Natural killer cell (primary cell): ENCODE measurements at regions of chr2 and their contacts with region 1.

Region 1: DNA sequence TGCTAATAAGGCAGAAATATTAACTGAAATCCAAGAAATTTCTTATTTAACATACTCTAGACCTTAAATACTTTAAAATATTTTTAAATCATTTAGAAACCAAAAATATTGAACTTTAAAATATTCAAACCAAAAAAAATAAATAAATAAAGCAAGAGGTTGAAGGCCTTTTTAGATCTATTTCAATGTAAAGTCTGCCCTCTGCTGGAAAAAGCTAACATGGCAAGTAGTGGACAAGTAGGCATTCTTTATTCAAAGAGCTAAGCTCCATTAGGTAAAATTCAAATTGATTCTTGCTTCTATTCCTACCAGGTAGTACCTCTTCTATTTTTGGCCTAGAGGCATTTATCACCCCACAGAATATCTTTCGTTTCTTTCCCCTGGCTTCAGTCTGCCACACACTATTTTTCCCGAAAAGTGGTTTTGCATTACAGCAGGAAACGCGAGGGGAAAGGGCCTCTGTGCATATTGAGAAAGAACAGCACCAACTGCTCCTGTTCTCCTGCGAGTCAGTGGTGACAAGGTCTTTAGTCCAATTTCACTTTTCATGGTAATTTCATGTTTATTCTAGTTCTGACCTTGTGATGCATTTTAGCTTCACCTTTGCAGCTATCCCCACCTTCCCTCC is 20.4 kb downstream of the IFIH1 start:
- DNase-seq: peak in 1 of 2 donors; percentile 82
- ATAC-seq: peak; percentile 71 to 78 (median 76)
- H3K4me3 ChIP-seq: no peak overlapping the region
- H3K4me3 Mint-ChIP-seq: no peak overlapping the region
- H3K27ac ChIP-seq: no peak overlapping the region
- H3K27ac Mint-ChIP-seq: no peak overlapping the region
- H3K4me1 ChIP-seq: no peaks in the 10 kb centered on the region
- H3K4me1 Mint-ChIP-seq: no peaks in the 10 kb centered on the region
- H3K27me3 ChIP-seq: no peaks in the 10 kb centered on the region
- H3K27me3 Mint-ChIP-seq: no peaks in the 10 kb centered on the region
- CTCF ChIP-seq: peak; percentile 97

Region 2: DNA sequence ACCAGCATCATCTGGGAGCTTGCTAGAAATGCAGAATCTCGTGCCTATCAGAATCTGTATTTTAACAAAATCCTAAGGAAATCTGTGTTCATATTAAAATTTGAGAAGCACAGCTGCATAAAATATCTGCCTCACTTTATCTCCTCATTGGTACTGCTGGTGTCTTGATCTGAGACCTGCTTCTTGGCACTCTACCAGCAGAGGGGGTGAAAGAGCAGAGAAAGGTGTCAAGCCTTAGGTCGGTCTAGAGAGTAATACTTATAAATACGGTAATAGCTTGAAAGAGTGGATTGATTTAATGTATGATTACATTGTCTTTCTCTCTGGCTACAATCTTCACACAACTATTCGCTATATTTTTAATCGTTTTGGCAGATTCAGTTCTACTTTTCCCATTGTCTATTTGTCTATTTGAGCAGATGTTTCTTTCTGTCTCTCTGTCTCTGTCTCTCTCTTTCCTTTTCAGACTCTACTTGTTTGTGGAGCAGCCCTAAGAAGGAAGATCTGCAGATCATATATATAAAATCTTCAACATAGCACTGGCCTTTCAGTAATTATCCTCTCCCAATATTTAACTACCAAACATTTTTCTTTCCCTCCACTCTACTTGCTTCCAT is 144.3 kb before region 1 on chr2:
- intact Hi-C with region 1: loop called (anchors 1 kb)
- DNase-seq: peak; percentile 18 to 77
- ATAC-seq: peak; percentile 85 to 97 (median 89)
- H3K4me3 ChIP-seq: no peak overlapping the region
- H3K4me3 Mint-ChIP-seq: no peak overlapping the region
- H3K27ac ChIP-seq: no peak overlapping the region
- H3K27ac Mint-ChIP-seq: no peak overlapping the region
- H3K4me1 ChIP-seq: no peaks in the 10 kb centered on the region
- H3K4me1 Mint-ChIP-seq: peaks cover 6% of the 10 kb centered on the region in 2 donors
- H3K27me3 ChIP-seq: peaks cover 7% of the 10 kb centered on the region
- H3K27me3 Mint-ChIP-seq: peaks cover 14 to 39% of the 10 kb centered on the region in 2 donors
- CTCF ChIP-seq: peak; percentile 73

Region 3: GRCh38 chr2:162221064-162221463 is 77.0 kb before region 1 on chr2:
- intact Hi-C with region 1: loop called (anchors 1 kb)
- DNase-seq: peak; percentile 41 to 65
- ATAC-seq: peak; percentile 77 to 87 (median 84)
- H3K4me3 ChIP-seq: no peak overlapping the region
- H3K4me3 Mint-ChIP-seq: no peak overlapping the region
- H3K27ac ChIP-seq: no peak overlapping the region
- H3K27ac Mint-ChIP-seq: no peak overlapping the region
- H3K4me1 ChIP-seq: no peaks in the 10 kb centered on the region
- H3K4me1 Mint-ChIP-seq: no peaks in the 10 kb centered on the region
- H3K27me3 ChIP-seq: no peaks in the 10 kb centered on the region
- H3K27me3 Mint-ChIP-seq: peaks cover 9 to 50% of the 10 kb centered on the region in 2 donors
- CTCF ChIP-seq: peak; percentile 89